Mammary epithelial cell (primary cell): ENCODE measurements at regions of chr5 and their contacts with region 1.

Region 1: GRCh38 chr5:149667084-149667828 is 62.9 kb upstream of the PPARGC1B start:
- DNase-seq: peak; percentile 19
- H3K4me3 ChIP-seq: no peak overlapping the region
- H3K27ac ChIP-seq: no peak overlapping the region
- H3K4me1 ChIP-seq: no peaks in the 10 kb centered on the region
- H3K27me3 ChIP-seq: no peaks in the 10 kb centered on the region
- CTCF ChIP-seq: peak; percentile 78 to 91

Region 2: GRCh38 chr5:149731639-149732323 is 64.5 kb after region 1 on chr5:
- CTCF ChIA-PET with region 1: interaction called, 3 read pairs
- dilution Hi-C with region 1: no loop called
- in situ Hi-C with region 1: no loop called
- intact Hi-C with region 1: loop called (anchors 1 kb)
- DNase-seq: peak; percentile 84
- H3K4me3 ChIP-seq: peak overlapping the region; percentile 79 to 96 (median 86)
- H3K27ac ChIP-seq: peak overlapping the region; percentile 48
- H3K4me1 ChIP-seq: peaks cover 35% of the 10 kb centered on the region
- H3K27me3 ChIP-seq: no peaks in the 10 kb centered on the region
- CTCF ChIP-seq: no peak

Region 3: GRCh38 chr5:149765932-149766331 is 98.7 kb after region 1 on chr5:
- CTCF ChIA-PET with region 1: interaction called, 18 read pairs
- dilution Hi-C with region 1: no loop called
- in situ Hi-C with region 1: no loop called
- intact Hi-C with region 1: no loop called
- DNase-seq: no peak
- H3K4me3 ChIP-seq: no peak overlapping the region
- H3K27ac ChIP-seq: no peak overlapping the region
- H3K4me1 ChIP-seq: peaks cover 9% of the 10 kb centered on the region
- H3K27me3 ChIP-seq: no peaks in the 10 kb centered on the region
- CTCF ChIP-seq: peak; percentile 45 to 59

Region 4: DNA sequence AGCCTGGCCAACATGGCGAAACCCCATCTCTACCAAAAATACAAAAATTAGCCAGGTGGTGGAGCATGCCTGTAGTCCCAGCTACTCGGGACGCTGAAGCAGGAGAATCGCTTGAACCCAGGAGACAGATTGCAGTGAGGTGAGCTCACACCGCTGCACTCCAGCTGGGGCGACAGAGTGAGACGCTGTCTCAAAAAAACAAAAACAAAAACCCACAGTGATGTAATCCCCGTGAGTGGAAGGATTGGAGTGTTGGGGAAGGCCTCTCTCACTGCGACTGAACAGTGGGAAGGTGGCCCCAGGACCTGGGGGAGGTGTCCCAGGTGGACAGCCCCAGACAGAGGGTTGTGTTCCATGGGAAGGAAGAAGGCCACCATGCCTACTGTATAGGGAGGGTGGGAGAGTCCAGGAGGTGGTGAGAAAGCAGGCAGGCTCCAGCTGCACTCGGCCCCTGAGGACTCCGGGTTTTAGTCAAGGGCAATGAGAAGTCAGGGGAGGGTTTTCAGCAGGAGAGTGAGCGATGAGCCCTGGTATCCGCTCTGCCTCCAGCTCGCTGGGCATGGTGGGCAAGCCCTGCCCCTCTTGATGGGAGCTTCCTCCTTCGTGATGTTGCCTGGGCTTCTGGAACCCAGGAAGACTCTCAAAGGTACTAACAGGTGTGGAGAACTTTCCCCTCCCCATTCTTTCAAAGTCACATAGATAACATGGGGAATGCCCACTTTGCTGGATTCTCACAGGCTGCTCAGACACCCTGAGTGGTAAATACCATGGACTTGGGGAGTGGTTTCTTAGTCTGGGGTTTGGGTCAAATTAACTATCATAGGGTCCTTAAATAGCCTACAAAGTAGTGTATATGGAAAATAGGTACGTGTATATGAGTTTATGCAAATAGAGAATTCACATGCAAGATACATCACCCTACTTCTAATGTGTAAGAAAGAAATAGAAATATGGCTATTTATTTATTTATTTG is 137.5 kb after region 1 on chr5:
- CTCF ChIA-PET with region 1: interaction called, 4 read pairs
- dilution Hi-C with region 1: loop called (anchors 5 kb)
- in situ Hi-C with region 1: no loop called
- intact Hi-C with region 1: no loop called
- DNase-seq: no peak
- H3K4me3 ChIP-seq: no peak overlapping the region
- H3K27ac ChIP-seq: no peak overlapping the region
- H3K4me1 ChIP-seq: peaks cover 15% of the 10 kb centered on the region
- H3K27me3 ChIP-seq: no peaks in the 10 kb centered on the region
- CTCF ChIP-seq: no peak

Region 5: DNA sequence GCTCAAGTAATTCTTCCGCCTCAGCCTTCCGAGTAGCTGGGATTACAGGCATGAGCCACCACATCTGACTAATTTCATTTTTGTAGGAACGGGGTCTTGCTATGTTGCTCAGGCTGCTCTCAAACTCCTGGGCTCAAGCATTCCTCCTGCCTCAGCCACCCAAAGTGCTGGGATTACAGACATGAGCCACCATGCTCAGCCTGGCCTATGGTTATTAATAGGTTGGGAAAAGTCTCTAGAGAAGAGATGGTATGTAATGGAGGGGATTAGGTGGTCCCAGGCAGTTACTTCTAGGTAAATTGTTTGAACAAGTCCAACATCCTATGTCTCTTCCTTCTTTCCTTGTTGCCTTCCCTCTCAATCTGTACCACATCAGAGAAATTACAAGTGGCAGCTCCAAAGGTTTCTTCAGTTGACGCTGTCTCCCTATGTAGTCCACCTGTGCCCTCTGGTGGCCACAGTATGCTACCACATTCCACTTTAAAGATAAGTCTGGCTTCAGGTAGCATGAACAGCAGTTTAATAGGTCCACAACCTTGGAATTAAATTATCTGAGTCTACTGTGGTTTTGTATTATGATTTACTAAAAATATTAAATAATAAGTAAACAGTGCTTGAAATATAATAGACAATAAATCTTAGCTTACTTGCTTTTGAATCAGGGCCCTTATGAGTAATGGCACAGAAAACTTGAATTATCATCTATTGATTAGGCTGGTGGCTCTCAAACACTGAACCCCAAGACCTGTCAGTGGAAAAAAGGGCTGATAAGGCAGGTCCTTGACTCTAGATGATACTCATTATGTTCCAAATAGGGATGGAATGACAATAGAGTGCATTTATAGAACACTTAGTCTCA is 323.5 kb after region 1 on chr5:
- CTCF ChIA-PET with region 1: no interaction called
- dilution Hi-C with region 1: loop called (anchors 10 kb)
- in situ Hi-C with region 1: no loop called
- intact Hi-C with region 1: no loop called
- DNase-seq: peak; percentile 57
- H3K4me3 ChIP-seq: no peak overlapping the region
- H3K27ac ChIP-seq: no peak overlapping the region
- H3K4me1 ChIP-seq: no peaks in the 10 kb centered on the region
- H3K27me3 ChIP-seq: no peaks in the 10 kb centered on the region
- CTCF ChIP-seq: peak; percentile 96 to 97